HCT116 (cell line): ENCODE measurements at regions of chr1 and their contacts with region 1.

Region 1: DNA sequence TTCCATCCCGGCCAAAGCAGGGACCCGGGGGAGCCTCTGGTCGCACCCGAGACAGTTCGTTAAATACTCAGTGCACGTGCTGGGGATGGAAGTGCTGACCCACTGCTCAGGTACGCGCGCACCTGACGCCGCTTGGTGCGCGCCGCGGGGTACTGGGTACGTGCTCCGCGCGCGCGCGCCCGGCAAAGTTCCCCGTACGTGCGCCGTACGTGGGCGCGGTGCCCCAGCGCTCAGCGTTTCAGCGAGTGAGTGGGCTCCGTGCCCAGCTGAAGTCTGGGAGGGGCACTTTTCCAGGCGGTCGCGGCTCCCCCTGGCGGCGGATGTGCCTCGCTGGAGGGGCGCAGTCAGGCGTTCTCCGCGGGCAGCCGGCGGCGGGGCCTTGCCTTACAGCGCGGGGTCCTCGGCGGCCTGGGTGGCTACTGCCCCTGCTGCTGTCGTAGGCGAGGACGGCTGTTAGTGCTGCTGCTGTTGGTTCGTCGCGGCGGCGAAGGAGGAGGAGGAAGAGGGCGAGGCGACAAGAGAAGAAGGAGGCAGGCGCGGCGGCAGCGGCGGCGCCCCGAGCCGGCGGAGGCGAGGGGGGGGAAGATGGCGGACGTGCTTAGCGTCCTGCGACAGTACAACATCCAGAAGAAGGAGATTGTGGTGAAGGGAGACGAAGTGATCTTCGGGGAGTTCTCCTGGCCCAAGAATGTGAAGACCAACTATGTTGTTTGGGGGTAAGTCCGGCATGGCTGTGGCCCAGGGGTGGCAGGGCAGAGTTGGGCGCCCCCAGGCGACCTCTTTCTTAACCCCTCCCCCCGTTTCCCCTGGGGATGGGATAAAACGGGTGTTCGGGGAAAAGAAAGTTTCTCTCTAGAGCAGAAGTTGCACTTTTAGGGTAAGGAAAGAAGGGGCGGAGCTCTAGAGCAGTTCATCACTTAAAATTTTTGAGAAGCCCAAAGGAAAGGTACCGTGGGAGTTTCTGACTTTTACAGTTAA is at the start of gene CDC73:
- DNase-seq: peak; percentile 95
- ATAC-seq: peak; percentile 92
- H3K4me3 ChIP-seq: peak within 1 kb of the TSS; percentile 76 to 88
- H3K27ac ChIP-seq: peak within 1 kb of the TSS; percentile 92
- H3K4me1 ChIP-seq: peaks cover 7 to 17% of the 10 kb centered on the region in 2 experiments
- H3K27me3 ChIP-seq: no peaks in the 10 kb centered on the region
- CTCF ChIP-seq: peak; percentile 81 to 96 (median 95)
- POLR2A ChIP-seq: peak; percentile 78
- RAD21 ChIP-seq: peak; percentile 96
- total RNA-seq, gene CDC73: 63.2 TPM

Region 2: DNA sequence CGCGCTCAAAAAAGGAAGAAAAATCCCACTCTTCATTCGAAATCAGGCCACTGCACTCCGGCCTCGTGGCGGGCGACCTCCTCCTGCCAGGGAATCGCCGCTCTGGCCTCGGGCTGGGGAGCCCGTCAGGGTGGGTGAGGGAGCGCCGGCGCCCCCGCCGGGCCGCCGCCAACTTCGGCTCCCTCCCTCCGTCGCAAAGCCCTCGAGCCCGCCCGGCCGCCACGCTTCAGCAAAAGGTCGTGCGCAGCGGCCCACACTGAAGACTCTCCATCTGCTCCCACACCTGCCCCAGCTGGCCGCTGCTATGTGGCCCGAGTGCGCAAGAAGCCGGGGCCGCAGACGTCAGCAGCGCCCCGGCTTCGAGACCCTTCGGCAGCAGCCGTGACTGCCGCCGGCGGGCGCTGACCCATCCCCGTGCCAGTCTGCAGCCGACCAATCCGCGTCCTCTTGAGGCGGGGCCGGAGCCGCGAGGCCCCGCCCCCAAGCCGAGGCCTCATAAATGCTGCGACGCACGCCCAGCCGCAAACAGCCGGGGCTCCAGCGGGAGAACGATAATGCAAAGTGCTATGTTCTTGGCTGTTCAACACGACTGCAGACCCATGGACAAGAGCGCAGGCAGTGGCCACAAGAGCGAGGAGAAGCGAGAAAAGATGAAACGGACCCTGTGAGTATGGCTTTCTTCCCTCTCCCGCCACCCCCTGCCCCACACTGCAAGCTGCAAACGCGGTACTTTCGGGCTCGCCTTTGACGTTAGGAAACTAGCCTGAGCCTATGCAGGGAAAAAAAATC is 313.2 kb before region 1 on chr1 and contains the start of gene RGS2:
- CTCF ChIA-PET with region 1: interaction called, 3 read pairs
- POLR2A ChIA-PET with region 1: no interaction called
- RAD21 ChIA-PET with region 1: no interaction called
- intact Hi-C with region 1: loop called (anchors 5 kb)
- DNase-seq: peak; percentile 77
- ATAC-seq: peak; percentile 96
- H3K4me3 ChIP-seq: peak within 1 kb of the TSS; percentile 91 to 93
- H3K27ac ChIP-seq: peak within 1 kb of the TSS; percentile 70
- H3K4me1 ChIP-seq: peaks cover 13 to 37% of the 10 kb centered on the region in 2 experiments; a peak in 3 of 4 replicates
- H3K27me3 ChIP-seq: no peaks in the 10 kb centered on the region
- CTCF ChIP-seq: peak in 2 of 3 experiments; percentile 18 to 37; a peak in 1 of 6 replicates
- POLR2A ChIP-seq: peak; percentile 92
- RAD21 ChIP-seq: peak; percentile 18; the same call in 1 of the 2 replicates
- total RNA-seq, gene RGS2: 21.1 TPM

Region 3: DNA sequence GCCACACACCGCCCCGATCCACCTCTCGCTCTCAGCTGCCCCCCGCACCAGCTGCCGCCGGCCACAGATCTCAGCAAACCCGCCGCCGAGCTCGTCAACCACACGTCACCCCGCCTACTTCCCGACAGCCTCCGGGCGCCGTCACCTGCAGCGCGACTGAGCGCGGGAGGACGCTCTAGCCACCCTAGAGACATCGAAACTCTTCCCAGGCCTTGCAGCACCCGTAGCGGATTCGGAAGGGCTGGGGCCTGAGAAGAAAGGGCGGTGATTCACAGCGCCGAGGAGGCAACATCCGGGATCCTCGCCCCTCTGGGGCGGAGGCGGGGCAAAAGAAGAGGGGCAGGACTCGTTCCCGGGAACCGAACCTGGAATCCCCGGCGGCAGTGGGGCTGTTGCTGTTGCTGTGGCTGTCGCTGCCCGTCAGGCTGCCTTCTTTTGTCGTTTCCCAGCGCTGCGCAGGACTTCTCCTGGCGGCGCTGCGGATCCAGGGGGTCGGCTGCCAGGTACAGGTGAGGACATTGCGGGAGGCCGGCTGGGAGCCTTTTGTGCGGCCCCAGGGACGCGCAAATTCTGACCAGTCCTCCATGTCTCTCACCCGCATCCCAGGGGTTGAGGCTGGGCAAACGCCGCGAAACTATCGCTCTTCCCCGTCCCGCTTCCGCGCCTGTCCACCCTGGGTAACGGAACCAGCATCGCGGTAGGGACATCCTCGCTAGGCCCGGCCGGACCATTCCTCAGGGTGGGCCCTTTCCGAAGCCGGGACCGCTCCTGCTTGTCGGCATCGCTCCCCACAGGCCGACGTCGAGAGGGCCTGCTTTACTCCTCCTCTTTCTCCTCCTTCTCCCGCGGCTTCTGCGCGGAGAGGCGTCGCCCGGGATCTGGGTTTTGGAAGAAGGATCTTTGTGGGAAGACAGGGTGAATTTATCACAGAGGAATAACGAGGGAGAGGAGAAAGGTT is 62.4 kb before region 1 on chr1 and contains the starts of genes RO60 and UCHL5:
- CTCF ChIA-PET with region 1: interaction called, 3 read pairs
- POLR2A ChIA-PET with region 1: interaction called, 5 read pairs
- RAD21 ChIA-PET with region 1: interaction called in 1 of 2 experiments, 3 read pairs
- intact Hi-C with region 1: loop called (anchors 1 kb)
- DNase-seq: peak; percentile 99
- ATAC-seq: peak; percentile 94
- H3K4me3 ChIP-seq: peak within 1 kb of the TSS; percentile 77 to 92
- H3K27ac ChIP-seq: peak within 1 kb of the TSS; percentile 93
- H3K4me1 ChIP-seq: peaks cover 11 to 25% of the 10 kb centered on the region in 2 experiments; a peak in 3 of 4 replicates
- H3K27me3 ChIP-seq: no peaks in the 10 kb centered on the region
- CTCF ChIP-seq: no peak
- POLR2A ChIP-seq: peak; percentile 94
- RAD21 ChIP-seq: no peak; the same call in 1 of the 2 replicates
- total RNA-seq, gene RO60: 69.5 TPM
- total RNA-seq, gene UCHL5: 75.8 TPM

Region 4: GRCh38 chr1:193104906-193105820 is 16.7 kb before region 1 on chr1 and contains the start of gene GLRX2:
- CTCF ChIA-PET with region 1: interaction called, 10 read pairs
- POLR2A ChIA-PET with region 1: interaction called, 11 read pairs
- RAD21 ChIA-PET with region 1: interaction called, 3 to 4 read pairs
- intact Hi-C with region 1: loop called (anchors 1 kb)
- DNase-seq: peak; percentile 71
- ATAC-seq: peak; percentile 90
- H3K4me3 ChIP-seq: peak within 1 kb of the TSS; percentile 58 to 74
- H3K27ac ChIP-seq: peak within 1 kb of the TSS; percentile 79
- H3K4me1 ChIP-seq: peaks cover 12 to 20% of the 10 kb centered on the region in 2 experiments; a peak in 3 of 4 replicates
- H3K27me3 ChIP-seq: no peaks in the 10 kb centered on the region
- CTCF ChIP-seq: no peak
- POLR2A ChIP-seq: peak; percentile 66
- RAD21 ChIP-seq: peak; percentile 28; the same call in 1 of the 2 replicates
- total RNA-seq, gene GLRX2: 30.6 TPM

Region 5: GRCh38 chr1:193456811-193457280 is 334.9 kb after region 1 on chr1:
- CTCF ChIA-PET with region 1: no interaction called
- POLR2A ChIA-PET with region 1: no interaction called
- RAD21 ChIA-PET with region 1: no interaction called
- intact Hi-C with region 1: no loop called
- DNase-seq: no peak
- ATAC-seq: no peak
- H3K4me3 ChIP-seq: no peak overlapping the region
- H3K27ac ChIP-seq: no peak overlapping the region
- H3K4me1 ChIP-seq: no peaks in the 10 kb centered on the region
- H3K27me3 ChIP-seq: no peaks in the 10 kb centered on the region
- CTCF ChIP-seq: no peak
- POLR2A ChIP-seq: no peak
- RAD21 ChIP-seq: no peak